ENCODE measurements at regions of chr2 and their contacts with region 1.

Region 1: GRCh38 chr2:37083873-37084794 is at the starts of genes GPATCH11 and HEATR5B:
- DNase-seq: peak; percentile 97
- total RNA-seq, gene GPATCH11: 6.7 TPM
- total RNA-seq, gene HEATR5B: 16.8 TPM

Region 2: GRCh38 chr2:37149626-37150322 is 65.6 kb after region 1 on chr2:
- intact Hi-C with region 1: no loop called
- DNase-seq: no peak

Region 3: GRCh38 chr2:37231241-37232130 is 147.4 kb after region 1 on chr2 and contains the starts of genes CEBPZ and NDUFAF7:
- intact Hi-C with region 1: loop called (anchors 5 kb)
- DNase-seq: peak; percentile 98
- total RNA-seq, gene CEBPZ: 31.4 TPM
- total RNA-seq, gene NDUFAF7: 24.2 TPM

Measured in cardiac septum (tissue), 1 donor.